Heart left ventricle (tissue), 16 donors: ENCODE measurements at regions of chr1 and their contacts with region 1.

Region 1: DNA sequence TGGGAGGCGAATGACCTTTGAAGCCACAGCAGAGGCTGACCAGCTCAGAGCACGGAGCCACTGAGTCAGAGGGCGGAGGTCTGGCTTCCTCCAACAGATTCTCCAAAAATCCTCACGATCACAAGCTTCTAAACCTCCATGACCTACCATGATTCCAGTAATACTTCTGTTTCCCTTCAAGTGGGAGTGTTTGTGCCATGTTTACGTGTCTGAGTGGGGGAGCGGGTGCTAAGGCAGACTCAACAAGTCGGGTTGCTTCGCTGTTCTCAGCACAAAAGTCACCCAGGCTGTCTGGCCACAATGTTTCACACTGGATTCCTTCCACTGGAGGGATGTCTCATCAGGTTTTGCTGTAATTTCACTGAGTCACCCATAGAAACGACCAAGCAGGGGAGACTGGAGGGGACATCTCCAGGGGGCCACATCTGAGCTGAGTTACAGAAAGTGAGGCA is 86.2 kb downstream of the SLC66A1 start:
- DNase-seq: no peak
- ATAC-seq: no peak
- H3K4me3 ChIP-seq: no peak overlapping the region
- H3K27ac ChIP-seq: peak overlapping the region in 1 of 12 donors; percentile 73
- H3K4me1 ChIP-seq: peaks cover 0 to 69% (median 45%) of the 10 kb centered on the region in 12 donors
- H3K27me3 ChIP-seq: no peaks in the 10 kb centered on the region
- CTCF ChIP-seq: peak in 4 of 12 donors; percentile 8 to 20 (median 15)
- POLR2A ChIP-seq: no peak

Region 2: GRCh38 chr1:19430121-19431068 is 32.1 kb after region 1 on chr1:
- intact Hi-C with region 1: loop called in 2 of 10 experiments (anchors 5 kb)
- DNase-seq: no peak
- ATAC-seq: peak; percentile 14 to 76 (median 73)
- H3K4me3 ChIP-seq: no peak overlapping the region
- H3K27ac ChIP-seq: peak overlapping the region in 11 of 12 donors; percentile 22 to 89 (median 58)
- H3K4me1 ChIP-seq: peaks cover 17 to 98% (median 87%) of the 10 kb centered on the region in 12 donors
- H3K27me3 ChIP-seq: no peaks in the 10 kb centered on the region
- CTCF ChIP-seq: no peak
- POLR2A ChIP-seq: no peak

Region 3: DNA sequence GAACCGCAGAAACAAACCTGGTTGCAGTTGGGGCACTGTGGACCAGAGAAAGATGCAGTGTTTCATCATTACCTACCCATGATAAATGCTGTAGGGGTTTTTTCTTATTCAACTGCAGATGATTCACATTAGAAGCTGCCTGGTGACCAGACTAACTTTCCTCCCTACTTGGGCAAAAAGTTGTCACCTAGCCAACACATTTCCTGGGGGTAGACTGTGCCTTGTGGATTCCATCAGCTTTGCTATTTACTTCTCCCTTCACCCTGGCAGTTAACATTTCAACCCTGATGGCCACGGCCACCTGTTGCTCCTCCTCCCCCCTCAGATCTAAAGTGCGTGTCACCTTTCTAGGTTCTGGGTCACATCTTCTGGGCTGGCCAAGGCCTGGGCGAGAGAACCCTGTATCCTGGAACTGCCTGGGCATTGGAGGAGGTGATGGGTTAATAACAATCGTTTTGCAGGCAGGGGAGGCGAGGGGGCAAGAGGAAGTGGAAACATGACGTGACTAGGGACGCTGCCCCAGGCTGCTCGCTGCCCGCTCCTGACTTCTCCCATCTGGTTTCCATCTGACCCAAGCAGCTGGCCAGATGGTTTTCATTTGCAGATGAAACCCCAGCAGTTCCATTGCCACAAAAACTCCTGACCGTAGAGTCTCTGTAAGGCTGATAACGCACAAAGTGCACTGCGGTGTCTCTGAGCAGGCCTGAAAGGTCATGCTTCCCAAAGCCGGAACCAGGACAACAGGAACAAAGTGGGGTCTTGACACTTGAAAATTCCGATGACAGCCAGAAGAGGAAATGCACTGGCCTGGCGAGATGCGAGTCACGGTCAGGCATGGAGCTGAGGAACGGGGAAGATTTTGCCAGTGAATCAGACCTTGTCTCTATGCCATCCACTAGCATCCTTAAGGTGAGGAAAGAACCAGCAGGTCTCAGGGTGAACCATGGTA is 50.4 kb after region 1 on chr1:
- intact Hi-C with region 1: loop called in 2 of 10 experiments (anchors 5 to 10 kb)
- DNase-seq: peak; percentile 65 to 84 (median 70)
- ATAC-seq: peak in 3 of 4 donors; percentile 50 to 72 (median 59)
- H3K4me3 ChIP-seq: no peak overlapping the region
- H3K27ac ChIP-seq: peak overlapping the region; percentile 43 to 93 (median 70)
- H3K4me1 ChIP-seq: peaks cover 3 to 100% (median 88%) of the 10 kb centered on the region in 12 donors
- H3K27me3 ChIP-seq: no peaks in the 10 kb centered on the region
- CTCF ChIP-seq: no peak
- POLR2A ChIP-seq: no peak

Region 4: GRCh38 chr1:19468397-19468956 is 70.1 kb after region 1 on chr1:
- intact Hi-C with region 1: loop called in 1 of 10 experiments (anchors 5 kb)
- DNase-seq: peak in 3 of 5 donors; percentile 39 to 59 (median 48)
- ATAC-seq: peak; percentile 21 to 70 (median 62)
- H3K4me3 ChIP-seq: peak overlapping the region in 1 of 12 donors; percentile 23
- H3K27ac ChIP-seq: peak overlapping the region in 10 of 12 donors; percentile 52 to 92 (median 62)
- H3K4me1 ChIP-seq: peaks cover 9 to 96% (median 64%) of the 10 kb centered on the region in 12 donors
- H3K27me3 ChIP-seq: no peaks in the 10 kb centered on the region
- CTCF ChIP-seq: no peak
- POLR2A ChIP-seq: no peak

Region 5: DNA sequence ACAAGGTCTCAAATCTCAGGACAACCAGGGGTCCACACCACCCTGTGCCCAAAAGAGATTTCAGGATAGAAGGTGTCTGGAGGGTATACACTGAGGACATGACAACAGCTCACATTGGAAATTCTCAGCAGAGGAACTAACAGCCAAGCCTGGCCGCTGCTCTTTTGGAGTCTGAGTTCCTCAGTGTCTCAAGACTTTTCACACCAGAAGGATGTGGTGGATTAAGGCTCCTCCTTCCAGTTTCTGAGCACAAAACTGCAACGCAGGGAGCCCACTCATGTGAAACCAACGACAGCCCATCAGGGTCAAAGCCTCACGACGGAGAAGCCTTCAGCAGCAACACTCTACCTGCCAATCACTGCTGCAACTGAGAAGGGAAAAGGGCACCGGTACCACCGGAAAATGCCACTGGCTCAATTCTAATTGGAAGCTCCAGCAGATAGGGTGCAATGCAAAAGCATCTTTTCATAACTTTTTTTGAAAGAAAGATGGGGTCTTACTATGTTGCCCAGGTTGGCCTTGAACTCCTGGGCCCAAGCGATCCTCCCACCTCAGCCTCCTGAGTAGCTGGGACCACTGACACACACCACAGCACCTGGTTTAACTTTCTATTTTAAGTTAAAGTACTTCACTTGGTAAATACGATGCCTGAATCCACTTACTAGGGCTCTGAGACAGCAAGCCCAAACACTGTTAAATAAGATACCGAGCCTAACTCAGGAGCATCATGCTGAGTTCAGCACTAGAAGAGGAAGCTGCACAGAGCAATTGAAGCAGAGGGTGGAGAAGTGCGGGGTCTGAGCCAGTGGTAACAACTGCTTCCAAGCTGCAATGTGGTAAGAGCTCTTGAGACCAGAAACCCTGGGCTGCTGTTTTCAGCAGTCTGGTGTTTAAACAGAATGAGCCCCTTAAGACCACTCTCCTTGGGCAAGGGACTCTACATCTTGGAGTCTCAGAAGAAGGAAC is 79.2 kb after region 1 on chr1:
- intact Hi-C with region 1: loop called in 4 of 10 experiments (anchors 5 to 10 kb)
- DNase-seq: peak in 1 of 5 donors; percentile 47
- ATAC-seq: peak in 3 of 4 donors; percentile 44 to 53 (median 51)
- H3K4me3 ChIP-seq: peak overlapping the region in 3 of 12 donors; percentile 6 to 23 (median 10)
- H3K27ac ChIP-seq: peak overlapping the region in 9 of 12 donors; percentile 1 to 89 (median 44)
- H3K4me1 ChIP-seq: peaks cover 14 to 100% (median 83%) of the 10 kb centered on the region in 12 donors
- H3K27me3 ChIP-seq: no peaks in the 10 kb centered on the region
- CTCF ChIP-seq: no peak
- POLR2A ChIP-seq: no peak

Region 6: GRCh38 chr1:19990689-19991088 is 592.4 kb after region 1 on chr1:
- intact Hi-C with region 1: no loop called
- DNase-seq: no peak
- ATAC-seq: no peak
- H3K4me3 ChIP-seq: no peak overlapping the region
- H3K27ac ChIP-seq: no peak overlapping the region
- H3K4me1 ChIP-seq: no peaks in the 10 kb centered on the region
- H3K27me3 ChIP-seq: peaks cover 0 to 17% (median 0%) of the 10 kb centered on the region in 9 donors
- CTCF ChIP-seq: no peak
- POLR2A ChIP-seq: no peak